Activated CD8-positive, alpha-beta T cell treated with anti-CD3 and anti-CD28 coated beads, Interleukin-2, amount 10 ng/mL, durations not matched to agents 7 days and 5 days (primary cell): ENCODE measurements at regions of chr9 and their contacts with region 1.

Region 1: GRCh38 chr9:36008774-36009300 is 27.9 kb upstream of the RECK start:
- DNase-seq: peak; percentile 84
- ATAC-seq: peak; percentile 99
- H3K4me3 Mint-ChIP-seq: no peak overlapping the region
- H3K27ac Mint-ChIP-seq: no peak overlapping the region
- H3K4me1 Mint-ChIP-seq: peaks cover 10% of the 10 kb centered on the region
- H3K27me3 Mint-ChIP-seq: peaks cover 51% of the 10 kb centered on the region

Region 2: GRCh38 chr9:35954942-35955546 is 53.8 kb before region 1 on chr9:
- CTCF ChIA-PET with region 1: interaction called, 22 read pairs
- POLR2A ChIA-PET with region 1: no interaction called
- DNase-seq: peak; percentile 69
- ATAC-seq: peak; percentile 79
- H3K4me3 Mint-ChIP-seq: no peak overlapping the region
- H3K27ac Mint-ChIP-seq: no peak overlapping the region
- H3K4me1 Mint-ChIP-seq: no peaks in the 10 kb centered on the region
- H3K27me3 Mint-ChIP-seq: peaks cover 19% of the 10 kb centered on the region

Region 3: GRCh38 chr9:35996358-35996975 is 12.4 kb before region 1 on chr9:
- CTCF ChIA-PET with region 1: interaction called, 21 read pairs
- POLR2A ChIA-PET with region 1: no interaction called
- DNase-seq: no peak
- ATAC-seq: no peak
- H3K4me3 Mint-ChIP-seq: no peak overlapping the region
- H3K27ac Mint-ChIP-seq: no peak overlapping the region
- H3K4me1 Mint-ChIP-seq: no peaks in the 10 kb centered on the region
- H3K27me3 Mint-ChIP-seq: peaks cover 34% of the 10 kb centered on the region

Region 4: GRCh38 chr9:36029765-36030528 is 21.1 kb after region 1 on chr9:
- CTCF ChIA-PET with region 1: interaction called, 129 read pairs
- POLR2A ChIA-PET with region 1: no interaction called
- DNase-seq: no peak
- ATAC-seq: no peak
- H3K4me3 Mint-ChIP-seq: no peak overlapping the region
- H3K27ac Mint-ChIP-seq: no peak overlapping the region
- H3K4me1 Mint-ChIP-seq: no peaks in the 10 kb centered on the region
- H3K27me3 Mint-ChIP-seq: peaks cover 40% of the 10 kb centered on the region

Region 5: DNA sequence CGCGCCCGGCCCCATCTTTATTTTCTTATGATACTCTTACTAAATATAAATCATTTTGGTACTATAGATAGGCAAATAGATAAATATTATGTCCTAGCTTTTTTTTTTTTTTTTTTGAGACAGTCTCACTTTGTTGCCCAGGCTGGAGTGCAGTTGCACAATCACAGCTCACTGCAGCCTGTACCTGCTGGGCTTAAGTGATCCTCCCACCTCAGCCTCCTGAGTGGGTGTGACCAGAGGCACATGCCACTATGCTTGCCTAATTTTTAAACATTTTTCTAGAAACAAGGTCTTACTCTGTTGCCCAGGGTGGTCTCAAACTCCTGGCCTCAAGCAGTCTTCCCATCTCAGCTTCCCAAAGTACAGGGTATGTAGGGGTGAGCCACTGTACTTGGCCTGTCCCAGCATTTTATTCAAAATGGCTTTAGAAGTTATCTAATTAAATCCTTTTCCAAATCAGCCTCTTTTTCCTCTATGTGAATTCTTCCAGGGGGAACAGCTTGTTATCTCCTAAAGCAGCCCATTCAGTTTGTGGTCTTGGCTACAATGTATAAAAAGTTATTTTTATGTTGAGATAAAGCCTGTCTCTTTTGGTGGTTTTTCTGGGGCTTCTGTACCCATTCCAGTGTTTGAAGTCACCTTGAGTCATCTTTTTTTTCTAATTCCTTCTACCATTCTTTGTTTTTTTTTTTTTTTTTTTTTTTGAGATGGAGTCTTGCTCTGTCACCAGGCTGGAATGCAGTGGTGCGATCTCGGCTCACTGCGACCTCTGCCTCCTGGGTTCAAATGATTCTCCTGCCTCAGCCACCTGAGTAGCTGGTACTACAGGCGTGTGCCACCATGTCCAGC is 576.0 kb after region 1 on chr9:
- CTCF ChIA-PET with region 1: no interaction called
- POLR2A ChIA-PET with region 1: no interaction called
- DNase-seq: no peak
- ATAC-seq: no peak
- H3K4me3 Mint-ChIP-seq: no peak overlapping the region
- H3K27ac Mint-ChIP-seq: no peak overlapping the region
- H3K4me1 Mint-ChIP-seq: peaks cover 10% of the 10 kb centered on the region
- H3K27me3 Mint-ChIP-seq: no peaks in the 10 kb centered on the region